ENCODE measurements at regions of chr2 and their contacts with region 1.

Region 1: GRCh38 chr2:45993476-45993991 is 303.7 kb upstream of the EPAS1 start:
- DNase-seq: peak; percentile 86
- ATAC-seq: no peak
- H3K4me3 ChIP-seq: no peak overlapping the region
- H3K27ac ChIP-seq: peak overlapping the region; percentile 92
- H3K4me1 ChIP-seq: peaks cover 30% of the 10 kb centered on the region
- H3K27me3 ChIP-seq: no peaks in the 10 kb centered on the region
- CTCF ChIP-seq: peak; percentile 91

Region 2: GRCh38 chr2:45946023-45946422 is 47.5 kb before region 1 on chr2:
- CTCF ChIA-PET with region 1: no interaction called
- POLR2A ChIA-PET with region 1: no interaction called
- intact Hi-C with region 1: loop called (anchors 1 kb)
- DNase-seq: peak; percentile 99
- ATAC-seq: peak; percentile 95
- H3K4me3 ChIP-seq: no peak overlapping the region
- H3K27ac ChIP-seq: peak overlapping the region; percentile 75
- H3K4me1 ChIP-seq: peaks cover 39% of the 10 kb centered on the region
- H3K27me3 ChIP-seq: no peaks in the 10 kb centered on the region
- CTCF ChIP-seq: no peak

Region 3: GRCh38 chr2:46056541-46056940 is 63.0 kb after region 1 on chr2:
- CTCF ChIA-PET with region 1: interaction called, 16 read pairs
- POLR2A ChIA-PET with region 1: no interaction called
- intact Hi-C with region 1: loop called (anchors 5 kb)
- DNase-seq: peak; percentile 19
- ATAC-seq: peak; percentile 49
- H3K4me3 ChIP-seq: no peak overlapping the region
- H3K27ac ChIP-seq: no peak overlapping the region
- H3K4me1 ChIP-seq: peaks cover 9% of the 10 kb centered on the region; the same call in 1 of the 2 replicates
- H3K27me3 ChIP-seq: no peaks in the 10 kb centered on the region
- CTCF ChIP-seq: 0 out of 2 replicates have a peak, but pooled peaks have one; percentile 10

Region 4: DNA sequence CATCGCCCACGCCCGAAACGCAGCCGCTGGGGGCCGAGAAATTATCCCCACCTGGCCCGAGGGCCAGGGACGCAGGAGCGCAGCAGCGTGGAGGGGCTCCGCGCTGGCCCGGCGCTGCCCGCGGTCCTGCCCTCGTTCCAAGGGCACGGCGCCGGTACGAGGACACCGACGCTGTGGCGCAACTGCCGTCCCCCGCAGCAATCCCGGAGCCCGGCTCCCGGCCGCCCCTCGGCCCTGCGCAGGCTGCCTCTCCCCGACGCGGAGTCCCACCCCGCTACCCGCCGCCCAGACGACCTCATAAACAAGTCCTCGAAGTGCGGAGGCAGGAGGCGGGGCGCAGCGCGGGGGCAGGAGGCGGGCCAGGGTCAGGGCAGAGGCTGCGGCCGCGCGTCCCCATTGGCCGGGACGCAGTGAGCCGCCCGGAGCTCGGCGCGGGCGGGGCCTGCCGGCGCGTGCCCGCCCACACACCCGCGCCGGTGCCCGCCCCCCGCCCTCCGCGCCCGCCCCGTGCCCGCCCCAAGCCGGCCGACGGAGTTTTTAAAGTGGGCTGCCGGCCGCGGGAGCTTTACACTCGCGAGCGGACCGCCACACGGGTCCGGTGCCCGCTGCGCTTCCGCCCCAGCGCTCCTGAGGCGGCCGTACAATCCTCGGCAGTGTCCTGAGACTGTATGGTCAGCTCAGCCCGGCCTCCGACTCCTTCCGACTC is 303.5 kb after region 1 on chr2 and contains the start of gene EPAS1:
- CTCF ChIA-PET with region 1: interaction called, 3 read pairs
- POLR2A ChIA-PET with region 1: no interaction called
- intact Hi-C with region 1: loop called (anchors 5 kb)
- DNase-seq: peak; percentile 80
- ATAC-seq: peak; percentile 77
- H3K4me3 ChIP-seq: peak within 1 kb of the TSS; percentile 98
- H3K27ac ChIP-seq: peak within 1 kb of the TSS; percentile 72
- H3K4me1 ChIP-seq: peaks cover 9% of the 10 kb centered on the region
- H3K27me3 ChIP-seq: no peaks in the 10 kb centered on the region
- CTCF ChIP-seq: no peak
- total RNA-seq, gene EPAS1: 43.2 and 77.0 TPM in 2 replicates

Region 5: GRCh38 chr2:46410273-46411247 is 417.0 kb after region 1 on chr2:
- CTCF ChIA-PET with region 1: no interaction called
- POLR2A ChIA-PET with region 1: interaction called, 8 read pairs
- intact Hi-C with region 1: loop called (anchors 2 kb)
- DNase-seq: no peak
- ATAC-seq: no peak
- H3K4me3 ChIP-seq: no peak overlapping the region
- H3K27ac ChIP-seq: peak overlapping the region; percentile 99
- H3K4me1 ChIP-seq: peaks cover 71% of the 10 kb centered on the region
- H3K27me3 ChIP-seq: no peaks in the 10 kb centered on the region
- CTCF ChIP-seq: no peak

Measured in PC-3 (cell line).